Activated CD4-positive, alpha-beta memory T cell treated with anti-CD3 and anti-CD28 coated beads for 36 hours (primary cell): ENCODE measurements at regions of chr19 and their contacts with region 1.

Region 1: DNA sequence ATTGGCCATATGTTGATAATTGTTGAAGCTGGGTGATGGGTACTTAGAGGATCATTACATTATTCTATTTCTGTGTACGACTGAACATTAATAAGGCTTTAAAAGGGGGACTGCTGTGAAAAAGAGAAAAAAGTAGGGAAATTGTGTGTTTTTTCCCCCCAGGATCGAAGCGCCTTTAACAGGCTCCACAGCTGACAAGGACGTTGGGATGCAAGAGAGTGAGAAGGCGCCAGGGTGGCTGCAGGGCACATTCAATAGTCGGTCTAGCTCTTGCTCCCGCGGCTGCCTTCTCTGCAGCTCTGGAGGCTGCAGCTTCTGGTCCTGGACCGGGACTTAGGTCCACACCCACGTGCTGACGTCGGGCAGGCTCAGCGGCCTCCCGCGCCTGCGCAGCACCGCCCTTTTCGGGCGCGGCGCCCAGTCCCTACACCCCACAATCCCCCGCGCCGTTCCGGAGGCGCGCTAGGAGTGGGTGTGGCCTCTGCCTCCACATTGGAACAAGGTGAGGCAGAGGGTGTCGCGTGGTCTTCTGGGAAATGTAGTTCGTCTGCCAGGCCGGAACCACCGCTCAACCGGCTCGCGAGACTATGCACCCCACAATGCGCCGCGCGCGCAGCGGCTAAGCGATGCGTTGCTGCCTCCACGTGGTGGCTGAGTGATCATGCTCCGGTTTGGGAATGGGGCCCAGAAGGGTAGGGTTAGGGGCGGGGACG is 4.9 kb upstream of the LRFN3 start:
- DNase-seq: peak; percentile 100
- H3K4me3 Mint-ChIP-seq: peak overlapping the region; percentile 62
- H3K27ac Mint-ChIP-seq: peak overlapping the region; percentile 79
- H3K4me1 Mint-ChIP-seq: peaks cover 30% of the 10 kb centered on the region
- H3K27me3 Mint-ChIP-seq: no peaks in the 10 kb centered on the region

Region 2: GRCh38 chr19:35748106-35749020 is 183.0 kb before region 1 on chr19 and contains the start of gene LIN37:
- CTCF ChIA-PET with region 1: interaction called, 6 read pairs
- POLR2A ChIA-PET with region 1: no interaction called
- intact Hi-C with region 1: loop called (anchors 1 kb)
- DNase-seq: peak; percentile 99
- H3K4me3 Mint-ChIP-seq: peak within 1 kb of the TSS; percentile 94
- H3K27ac Mint-ChIP-seq: peak within 1 kb of the TSS; percentile 88
- H3K4me1 Mint-ChIP-seq: peaks cover 42% of the 10 kb centered on the region
- H3K27me3 Mint-ChIP-seq: no peaks in the 10 kb centered on the region
- total RNA-seq, gene LIN37: 7.5 TPM

Region 3: GRCh38 chr19:35882114-35882832 is 49.0 kb before region 1 on chr19:
- CTCF ChIA-PET with region 1: interaction called, 57 read pairs
- POLR2A ChIA-PET with region 1: interaction called, 7 read pairs
- intact Hi-C with region 1: loop called (anchors 1 kb)
- DNase-seq: no peak
- H3K4me3 Mint-ChIP-seq: no peak overlapping the region
- H3K27ac Mint-ChIP-seq: no peak overlapping the region
- H3K4me1 Mint-ChIP-seq: peaks cover 6% of the 10 kb centered on the region
- H3K27me3 Mint-ChIP-seq: peaks cover 14% of the 10 kb centered on the region

Region 4: GRCh38 chr19:35899547-35900214 is 31.6 kb before region 1 on chr19:
- CTCF ChIA-PET with region 1: interaction called, 5 read pairs
- POLR2A ChIA-PET with region 1: interaction called, 8 read pairs
- intact Hi-C with region 1: loop called (anchors 1 kb)
- DNase-seq: peak; percentile 93
- H3K4me3 Mint-ChIP-seq: peak overlapping the region; percentile 92
- H3K27ac Mint-ChIP-seq: peak overlapping the region; percentile 97
- H3K4me1 Mint-ChIP-seq: peaks cover 59% of the 10 kb centered on the region
- H3K27me3 Mint-ChIP-seq: no peaks in the 10 kb centered on the region

Region 5: GRCh38 chr19:35977446-35978222 is 46.3 kb after region 1 on chr19:
- CTCF ChIA-PET with region 1: no interaction called
- POLR2A ChIA-PET with region 1: no interaction called
- intact Hi-C with region 1: no loop called
- DNase-seq: peak; percentile 49
- H3K4me3 Mint-ChIP-seq: no peak overlapping the region
- H3K27ac Mint-ChIP-seq: no peak overlapping the region
- H3K4me1 Mint-ChIP-seq: no peaks in the 10 kb centered on the region
- H3K27me3 Mint-ChIP-seq: peaks cover 20% of the 10 kb centered on the region

Region 6: DNA sequence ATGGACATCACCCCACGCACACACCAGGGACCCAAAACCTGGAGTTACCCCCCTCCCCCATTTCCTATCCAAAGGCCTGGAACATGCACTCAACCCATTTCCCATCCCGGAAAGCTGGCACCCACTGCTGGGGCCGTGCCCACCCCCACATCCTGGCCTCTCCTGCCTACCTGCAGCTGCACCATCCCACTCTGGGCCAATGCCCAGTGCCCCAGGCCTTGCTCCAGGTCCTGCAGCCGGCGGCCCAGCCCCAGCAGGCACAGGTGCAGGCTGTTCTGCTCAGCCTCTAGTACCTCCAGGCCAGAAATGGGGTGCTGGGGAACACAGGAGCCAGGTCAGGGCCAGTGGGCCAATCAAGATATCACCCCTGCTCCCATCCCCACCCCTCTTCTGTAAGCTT is 75.6 kb after region 1 on chr19:
- CTCF ChIA-PET with region 1: no interaction called
- POLR2A ChIA-PET with region 1: no interaction called
- intact Hi-C with region 1: no loop called
- DNase-seq: no peak
- H3K4me3 Mint-ChIP-seq: no peak overlapping the region
- H3K27ac Mint-ChIP-seq: no peak overlapping the region
- H3K4me1 Mint-ChIP-seq: peaks cover 13% of the 10 kb centered on the region
- H3K27me3 Mint-ChIP-seq: no peaks in the 10 kb centered on the region